ENCODE measurements at regions of chr14 and their contacts with region 1.

Region 1: GRCh38 chr14:24690492-24690891 is 56.5 kb upstream of the GZMB start:
- DNase-seq: no peak
- H3K4me3 Mint-ChIP-seq: no peak overlapping the region
- H3K27ac Mint-ChIP-seq: no peak overlapping the region
- H3K4me1 Mint-ChIP-seq: peaks cover 45% of the 10 kb centered on the region
- H3K27me3 Mint-ChIP-seq: no peaks in the 10 kb centered on the region

Region 2: DNA sequence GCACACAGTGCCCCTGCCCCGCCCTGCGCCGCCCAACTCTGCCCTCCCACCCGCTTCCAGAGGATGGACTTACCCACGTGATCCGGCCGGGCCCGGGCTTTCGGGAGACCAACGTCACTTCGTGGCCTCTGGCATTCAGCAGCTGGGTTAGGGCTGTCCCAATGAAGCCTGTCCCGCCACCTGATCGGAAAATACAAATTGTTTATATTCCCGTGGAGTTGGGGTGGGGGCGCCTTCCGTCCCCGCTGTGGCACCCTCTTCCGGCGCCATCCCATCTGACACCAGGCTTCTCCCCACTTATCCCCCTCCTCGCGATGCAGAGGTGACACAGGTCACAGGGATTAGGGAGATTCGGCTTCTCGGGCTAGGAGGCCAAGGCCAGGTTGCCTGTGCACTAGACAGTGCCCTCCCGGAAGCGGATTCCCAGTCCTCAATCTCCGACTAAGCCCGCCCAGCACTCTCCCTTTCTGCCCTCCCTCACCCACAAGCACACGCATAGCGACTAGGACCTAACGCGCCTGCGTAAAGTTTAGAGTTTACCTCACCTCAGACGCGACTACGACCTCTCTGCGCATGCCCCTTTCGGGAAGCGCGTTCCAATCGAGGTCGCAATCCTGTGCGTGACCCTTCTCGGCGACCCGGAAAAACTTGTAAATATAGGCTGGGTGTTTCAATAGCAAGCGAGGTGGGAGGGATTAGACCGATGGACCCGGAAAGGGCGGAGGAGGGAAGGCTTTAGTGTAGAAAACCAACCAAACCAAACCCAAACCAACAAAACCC is 248.0 kb before region 1 on chr14 and contains the start of gene SDR39U1:
- intact Hi-C with region 1: loop called (anchors 2 kb)
- DNase-seq: peak; percentile 98
- H3K4me3 Mint-ChIP-seq: peak within 1 kb of the TSS; percentile 95
- H3K27ac Mint-ChIP-seq: peak within 1 kb of the TSS; percentile 98
- H3K4me1 Mint-ChIP-seq: peaks cover 40% of the 10 kb centered on the region
- H3K27me3 Mint-ChIP-seq: no peaks in the 10 kb centered on the region
- total RNA-seq, gene SDR39U1: 40.8 and 47.7 TPM in 2 replicates

Region 3: GRCh38 chr14:24605435-24606190 is 84.9 kb before region 1 on chr14:
- intact Hi-C with region 1: loop called (anchors 5 kb)
- DNase-seq: peak; percentile 63
- H3K4me3 Mint-ChIP-seq: peak overlapping the region; percentile 74
- H3K27ac Mint-ChIP-seq: peak overlapping the region; percentile 88
- H3K4me1 Mint-ChIP-seq: peaks cover 49% of the 10 kb centered on the region
- H3K27me3 Mint-ChIP-seq: peaks cover 1% of the 10 kb centered on the region

Region 4: DNA sequence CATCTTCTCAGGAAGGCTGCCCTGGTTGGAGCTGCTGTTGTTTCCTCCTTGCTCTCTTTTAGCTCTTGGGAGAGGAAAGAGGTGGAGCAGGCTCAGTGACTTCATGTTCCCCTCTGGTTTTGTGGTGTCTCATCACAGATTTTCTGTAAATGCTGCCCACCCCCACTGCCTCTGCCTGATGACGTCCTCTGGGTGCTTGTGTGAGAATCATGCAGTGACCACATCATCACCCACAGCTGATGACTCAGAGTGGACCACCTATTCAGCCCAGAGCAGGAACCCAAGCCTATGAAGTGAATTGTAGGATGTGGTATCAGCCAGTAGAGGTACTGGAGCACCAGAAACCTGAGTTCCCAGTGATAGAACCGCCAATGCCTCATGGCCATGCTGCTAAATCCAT is 56.3 kb before region 1 on chr14 and contains the start of gene GZMB:
- intact Hi-C with region 1: loop called (anchors 2 kb)
- DNase-seq: peak; percentile 59
- H3K4me3 Mint-ChIP-seq: peak within 1 kb of the TSS; percentile 95
- H3K27ac Mint-ChIP-seq: peak within 1 kb of the TSS; percentile 93
- H3K4me1 Mint-ChIP-seq: peaks cover 75% of the 10 kb centered on the region
- H3K27me3 Mint-ChIP-seq: no peaks in the 10 kb centered on the region
- total RNA-seq, gene GZMB: 4,664 and 4,741 TPM in 2 replicates

Region 5: GRCh38 chr14:24665440-24665991 is 25.0 kb before region 1 on chr14:
- intact Hi-C with region 1: loop called (anchors 2 kb)
- DNase-seq: peak; percentile 52
- H3K4me3 Mint-ChIP-seq: peak overlapping the region; percentile 59
- H3K27ac Mint-ChIP-seq: peak overlapping the region; percentile 93
- H3K4me1 Mint-ChIP-seq: peaks cover 85% of the 10 kb centered on the region
- H3K27me3 Mint-ChIP-seq: no peaks in the 10 kb centered on the region

Region 6: GRCh38 chr14:24673534-24674203 is 16.8 kb before region 1 on chr14:
- intact Hi-C with region 1: loop called (anchors 1 kb)
- DNase-seq: peak; percentile 75
- H3K4me3 Mint-ChIP-seq: peak overlapping the region; percentile 73
- H3K27ac Mint-ChIP-seq: peak overlapping the region; percentile 97
- H3K4me1 Mint-ChIP-seq: peaks cover 78% of the 10 kb centered on the region
- H3K27me3 Mint-ChIP-seq: no peaks in the 10 kb centered on the region

Region 7: DNA sequence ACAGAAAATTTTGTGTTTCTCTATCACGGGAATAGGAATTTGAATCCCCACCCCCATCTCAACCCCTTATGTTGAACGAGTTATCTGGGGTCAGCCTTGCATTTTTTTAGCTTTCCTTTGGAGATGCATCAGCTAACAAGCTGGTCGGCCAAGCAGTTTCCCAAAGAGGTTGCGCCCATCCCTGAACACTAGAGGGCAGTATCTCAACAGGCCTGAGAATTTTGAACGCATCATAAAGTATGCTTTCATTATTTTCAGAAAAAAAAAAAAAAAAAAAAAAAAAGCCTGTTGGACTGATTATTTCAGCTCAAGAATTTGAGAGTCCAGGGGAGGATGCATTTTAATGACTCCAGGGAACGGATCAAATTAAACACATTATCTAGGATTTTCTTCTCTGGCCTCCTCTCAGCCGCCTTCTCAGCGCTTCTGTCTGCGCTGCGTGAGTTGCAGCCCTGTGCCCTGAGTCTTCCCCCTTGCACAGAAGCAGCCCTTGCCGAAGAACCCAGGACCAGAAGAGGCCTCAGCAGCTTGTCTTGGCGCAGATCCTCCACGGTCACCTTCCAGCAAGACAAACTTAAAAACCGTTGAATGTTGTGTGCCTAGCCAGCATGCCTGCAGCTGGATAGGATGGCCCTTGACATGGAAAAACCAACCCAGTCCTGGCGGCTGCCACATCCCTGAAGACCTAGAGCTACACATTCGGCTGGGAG is 20.1 kb after region 1 on chr14:
- intact Hi-C with region 1: loop called (anchors 1 kb)
- DNase-seq: peak; percentile 52
- H3K4me3 Mint-ChIP-seq: no peak overlapping the region
- H3K27ac Mint-ChIP-seq: no peak overlapping the region
- H3K4me1 Mint-ChIP-seq: peaks cover 2% of the 10 kb centered on the region
- H3K27me3 Mint-ChIP-seq: peaks cover 4% of the 10 kb centered on the region